ENCODE measurements at regions of chr12 and their contacts with region 1.

Region 1: DNA sequence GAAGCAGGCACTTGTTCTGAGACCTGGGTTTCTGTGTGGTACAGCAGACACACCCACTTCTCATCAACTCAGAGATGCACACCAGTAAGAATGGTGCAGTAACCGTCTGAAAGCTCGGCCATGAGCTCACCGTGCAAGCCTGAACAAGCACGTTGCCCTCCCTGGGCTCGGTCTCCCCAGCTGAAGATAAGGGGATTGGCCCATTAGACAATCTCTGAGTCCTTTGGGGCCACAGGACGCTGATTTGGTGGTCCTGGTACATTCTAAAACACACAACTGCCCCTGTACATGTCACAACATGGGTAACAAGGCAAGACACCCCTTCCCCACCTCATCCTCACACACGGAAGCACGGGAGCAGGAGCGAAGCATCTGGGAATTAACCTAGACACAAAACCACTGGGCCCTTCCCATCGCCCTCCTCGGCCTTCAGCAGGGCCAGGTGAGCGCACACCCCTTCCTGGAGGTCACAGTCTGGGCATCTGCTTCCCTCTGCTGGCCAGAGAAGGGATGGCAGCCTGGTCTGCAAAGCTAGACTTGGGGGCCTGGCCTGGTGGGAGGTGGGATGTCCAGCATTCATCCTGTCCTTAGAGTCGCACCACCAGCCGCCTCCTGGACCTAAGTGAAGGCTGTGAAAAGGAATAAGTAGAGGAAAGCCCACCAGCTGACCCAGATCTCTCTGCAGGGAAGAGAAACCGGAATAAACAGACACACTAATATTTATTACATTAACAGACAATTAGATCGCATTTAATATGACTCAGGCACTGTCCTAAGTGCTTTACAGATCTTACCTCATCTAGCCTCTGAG is 18.9 kb upstream of the SMUG1 start:
- DNase-seq: peak; percentile 80
- H3K4me3 Mint-ChIP-seq: no peak overlapping the region
- H3K27ac Mint-ChIP-seq: no peak overlapping the region
- H3K4me1 Mint-ChIP-seq: peaks cover 6% of the 10 kb centered on the region
- H3K27me3 Mint-ChIP-seq: peaks cover 11% of the 10 kb centered on the region
- CTCF ChIP-seq: peak; percentile 90

Region 2: GRCh38 chr12:53999559-54000104 is 208.1 kb before region 1 on chr12:
- CTCF ChIA-PET with region 1: interaction called, 200 read pairs
- POLR2A ChIA-PET with region 1: interaction called, 11 read pairs
- intact Hi-C with region 1: no loop called
- DNase-seq: peak; percentile 90
- H3K4me3 Mint-ChIP-seq: peak overlapping the region; percentile 89
- H3K27ac Mint-ChIP-seq: peak overlapping the region; percentile 97
- H3K4me1 Mint-ChIP-seq: peaks cover 12% of the 10 kb centered on the region
- H3K27me3 Mint-ChIP-seq: no peaks in the 10 kb centered on the region
- CTCF ChIP-seq: no peak

Region 3: DNA sequence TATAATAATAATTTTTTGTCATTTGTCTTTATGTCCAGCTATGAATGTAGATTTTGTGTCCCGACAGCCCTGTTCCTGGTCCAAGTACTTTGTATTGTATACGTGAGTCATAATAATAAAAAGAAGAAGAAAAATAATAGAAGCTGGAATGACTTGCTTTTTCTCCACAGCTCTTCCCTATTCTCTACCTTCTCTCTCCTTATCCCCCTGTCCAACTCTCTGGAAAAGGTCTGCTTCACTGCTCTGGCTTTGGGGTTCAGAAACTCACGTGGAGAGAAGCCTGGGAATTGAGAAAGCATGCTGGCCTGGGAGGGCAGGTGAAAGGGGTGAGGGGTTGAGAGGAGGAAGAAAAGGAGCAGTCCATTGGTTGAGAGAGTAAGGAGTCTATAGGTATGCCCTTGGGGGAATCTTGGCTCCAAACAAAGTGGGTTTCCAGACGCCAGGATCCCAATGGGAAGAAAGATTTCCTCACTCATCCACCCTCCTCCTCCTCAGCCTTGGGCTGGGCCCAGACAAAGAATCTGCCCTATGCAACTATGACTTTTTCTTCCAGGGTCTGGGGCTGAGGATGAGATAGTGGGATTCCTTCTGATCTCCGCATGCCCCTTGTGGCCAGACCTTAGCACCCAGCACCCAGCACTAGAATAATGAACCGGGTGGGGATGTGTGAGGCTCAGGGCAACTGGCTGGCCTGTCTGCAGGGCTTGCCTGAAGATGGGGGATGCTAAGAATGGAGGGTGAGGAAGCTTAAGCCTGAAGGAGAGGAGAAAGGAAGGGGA is 194.9 kb before region 1 on chr12:
- CTCF ChIA-PET with region 1: interaction called, 200 read pairs
- POLR2A ChIA-PET with region 1: interaction called, 8 read pairs
- intact Hi-C with region 1: no loop called
- DNase-seq: no peak
- H3K4me3 Mint-ChIP-seq: no peak overlapping the region
- H3K27ac Mint-ChIP-seq: no peak overlapping the region
- H3K4me1 Mint-ChIP-seq: peaks cover 17% of the 10 kb centered on the region
- H3K27me3 Mint-ChIP-seq: no peaks in the 10 kb centered on the region
- CTCF ChIP-seq: no peak

Region 4: GRCh38 chr12:54191550-54192022 is 16.1 kb before region 1 on chr12:
- CTCF ChIA-PET with region 1: interaction called, 111 read pairs
- POLR2A ChIA-PET with region 1: no interaction called
- intact Hi-C with region 1: no loop called
- DNase-seq: peak; percentile 87
- H3K4me3 Mint-ChIP-seq: no peak overlapping the region
- H3K27ac Mint-ChIP-seq: no peak overlapping the region
- H3K4me1 Mint-ChIP-seq: peaks cover 9% of the 10 kb centered on the region
- H3K27me3 Mint-ChIP-seq: no peaks in the 10 kb centered on the region
- CTCF ChIP-seq: peak; percentile 48

Measured in MCF 10A (cell line).